ENCODE measurements at regions of chr15 and their contacts with region 1.

Region 1: DNA sequence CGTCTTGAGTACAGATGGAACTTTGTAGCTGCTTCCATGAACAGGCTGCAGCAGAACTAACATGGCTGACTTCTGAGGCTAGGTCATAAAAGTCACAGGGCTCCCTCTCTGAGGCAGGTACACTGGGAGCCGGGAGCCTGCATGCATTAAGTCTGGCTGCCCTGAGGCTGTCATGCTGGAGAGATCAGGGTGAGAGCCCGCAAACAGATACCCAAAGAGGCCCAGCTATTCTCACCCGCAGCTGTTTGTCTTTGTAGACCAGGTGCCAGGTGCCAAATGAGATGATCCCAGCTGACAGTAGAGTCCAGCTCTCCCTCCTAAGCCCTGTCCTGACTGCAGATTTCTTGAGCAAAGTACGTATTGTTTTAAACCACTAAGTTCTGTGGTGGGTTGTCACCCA is 8.6 kb upstream of the SLCO3A1 start:
- DNase-seq: no peak
- H3K4me3 ChIP-seq: no peak overlapping the region
- H3K27ac ChIP-seq: no peak overlapping the region
- H3K4me1 ChIP-seq: no peaks in the 10 kb centered on the region
- H3K27me3 ChIP-seq: no peaks in the 10 kb centered on the region
- CTCF ChIP-seq: no peak

Region 2: DNA sequence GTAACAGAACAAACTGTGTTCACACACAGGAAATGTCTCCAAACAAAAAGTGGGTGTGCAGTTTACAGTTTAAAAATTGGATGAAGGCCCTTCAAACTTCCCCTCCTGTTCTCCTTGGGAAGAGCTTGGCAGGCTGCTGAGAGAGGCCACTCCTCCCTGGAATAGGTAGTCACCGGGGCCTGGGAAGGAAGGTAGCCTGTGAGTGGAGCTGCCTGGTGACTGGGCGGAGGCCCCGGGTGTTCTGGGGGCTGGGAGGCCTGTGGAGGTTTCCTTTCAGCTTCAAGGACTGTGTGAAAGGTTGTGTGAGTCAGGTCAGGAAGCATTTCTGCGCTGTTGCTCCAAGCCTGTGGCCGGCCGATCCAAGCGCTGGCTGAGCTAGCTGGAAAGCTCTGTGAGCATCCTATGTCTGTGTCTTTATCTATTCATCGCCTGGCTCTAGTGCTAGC is 22.7 kb after region 1 on chr15:
- intact Hi-C with region 1: loop called (anchors 2 kb)
- DNase-seq: peak; percentile 69 to 80
- H3K4me3 ChIP-seq: peak overlapping the region in 1 of 2 donors; percentile 15
- H3K27ac ChIP-seq: peak overlapping the region; percentile 63 to 70
- H3K4me1 ChIP-seq: peaks cover 0 to 45% (median 16%) of the 10 kb centered on the region in 4 donors
- H3K27me3 ChIP-seq: no peaks in the 10 kb centered on the region
- CTCF ChIP-seq: no peak

Region 3: DNA sequence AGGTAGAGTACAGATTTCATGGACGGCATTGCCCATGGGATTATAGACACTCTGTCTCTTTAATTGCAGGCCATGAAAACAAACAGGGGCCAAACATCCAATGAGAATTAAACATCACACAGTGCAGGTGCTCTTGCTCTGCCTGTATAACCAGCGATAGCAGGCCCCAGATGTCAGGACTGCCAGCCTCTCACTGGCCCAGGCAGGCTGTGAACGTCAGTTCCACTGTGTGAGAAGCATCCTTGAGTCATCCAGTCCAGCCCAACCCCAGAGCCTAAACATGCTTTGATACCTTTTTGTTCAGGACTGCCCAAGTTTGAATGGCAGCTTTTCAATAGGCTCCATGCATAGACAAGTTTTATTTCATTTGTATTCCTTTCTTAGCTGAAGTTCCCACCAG is 198.3 kb after region 1 on chr15:
- intact Hi-C with region 1: no loop called
- DNase-seq: no peak
- H3K4me3 ChIP-seq: no peak overlapping the region
- H3K27ac ChIP-seq: no peak overlapping the region
- H3K4me1 ChIP-seq: no peaks in the 10 kb centered on the region
- H3K27me3 ChIP-seq: no peaks in the 10 kb centered on the region
- CTCF ChIP-seq: no peak